Activated CD4-positive, alpha-beta T cell treated with anti-CD3 and anti-CD28 coated beads for 36 hours (primary cell): ENCODE measurements at regions of chr1 and their contacts with region 1.

Region 1: DNA sequence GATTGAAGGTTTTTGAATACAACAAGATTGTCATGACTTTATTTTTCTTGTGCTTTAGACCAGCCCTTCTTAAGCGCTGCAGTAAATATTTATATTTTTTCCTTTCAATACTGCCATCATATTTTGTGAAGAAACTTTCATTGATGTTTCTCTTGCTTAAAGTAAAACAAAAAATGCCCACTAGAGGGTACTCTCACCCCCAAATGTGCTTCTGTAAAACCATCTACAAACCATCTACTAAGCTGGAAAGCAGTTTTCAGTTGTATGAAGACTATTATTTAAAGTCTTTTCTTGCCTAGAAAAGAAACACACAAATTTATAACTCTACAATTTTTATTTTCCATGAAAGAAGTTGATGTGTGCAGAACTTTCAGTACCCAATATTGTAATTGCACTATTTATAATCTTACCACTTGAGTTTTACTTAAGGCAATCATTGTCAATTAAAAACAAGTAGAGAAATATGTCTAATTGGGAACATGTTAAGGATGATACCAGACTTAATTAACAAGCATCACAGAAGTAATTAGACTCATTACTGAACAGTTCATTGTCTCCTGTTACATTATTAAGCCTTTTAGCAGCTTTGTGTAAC is 10.7 kb downstream of the LEPR start:
- DNase-seq: no peak
- ATAC-seq: no peak
- H3K4me3 Mint-ChIP-seq: no peak overlapping the region
- H3K27ac Mint-ChIP-seq: no peak overlapping the region
- H3K4me1 Mint-ChIP-seq: peaks cover 10% of the 10 kb centered on the region
- H3K27me3 Mint-ChIP-seq: no peaks in the 10 kb centered on the region

Region 2: DNA sequence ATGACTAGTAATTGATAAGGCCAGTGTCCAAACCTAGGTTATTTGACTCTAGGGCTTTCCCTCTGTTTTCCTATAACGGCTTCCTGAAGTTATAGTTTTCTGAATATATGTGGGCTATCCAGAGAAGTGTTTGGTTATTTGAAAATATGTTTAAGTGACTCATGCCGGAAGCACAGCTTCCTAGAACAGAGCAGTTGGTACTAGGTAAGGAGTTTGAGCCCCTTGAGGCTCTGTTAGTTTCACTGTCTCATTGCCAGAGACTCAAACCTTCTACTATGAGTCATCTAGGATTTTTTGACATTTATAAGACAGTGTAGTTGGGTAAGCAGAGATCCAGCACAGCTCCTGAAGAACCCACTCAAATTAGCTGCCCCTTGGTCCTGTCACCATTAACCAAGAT is 37.9 kb before region 1 on chr1:
- CTCF ChIA-PET with region 1: interaction called, 12 read pairs
- POLR2A ChIA-PET with region 1: no interaction called
- intact Hi-C with region 1: no loop called
- DNase-seq: peak; percentile 45
- ATAC-seq: peak; percentile 87
- H3K4me3 Mint-ChIP-seq: no peak overlapping the region
- H3K27ac Mint-ChIP-seq: peak overlapping the region; percentile 28
- H3K4me1 Mint-ChIP-seq: peaks cover 57% of the 10 kb centered on the region
- H3K27me3 Mint-ChIP-seq: no peaks in the 10 kb centered on the region

Region 3: GRCh38 chr1:65459397-65459768 is 28.2 kb after region 1 on chr1:
- CTCF ChIA-PET with region 1: interaction called, 4 read pairs
- POLR2A ChIA-PET with region 1: no interaction called
- intact Hi-C with region 1: loop called in 1 of 2 experiments (anchors 1 kb)
- DNase-seq: no peak
- ATAC-seq: peak; percentile 39
- H3K4me3 Mint-ChIP-seq: no peak overlapping the region
- H3K27ac Mint-ChIP-seq: no peak overlapping the region
- H3K4me1 Mint-ChIP-seq: peaks cover 17% of the 10 kb centered on the region
- H3K27me3 Mint-ChIP-seq: no peaks in the 10 kb centered on the region

Region 4: GRCh38 chr1:65471861-65472332 is 40.7 kb after region 1 on chr1:
- CTCF ChIA-PET with region 1: no interaction called
- POLR2A ChIA-PET with region 1: no interaction called
- intact Hi-C with region 1: no loop called
- DNase-seq: no peak
- ATAC-seq: no peak
- H3K4me3 Mint-ChIP-seq: no peak overlapping the region
- H3K27ac Mint-ChIP-seq: no peak overlapping the region
- H3K4me1 Mint-ChIP-seq: no peaks in the 10 kb centered on the region
- H3K27me3 Mint-ChIP-seq: no peaks in the 10 kb centered on the region